ENCODE measurements at regions of chr10 and their contacts with region 1.

Region 1: GRCh38 chr10:20776384-20777118 is 120.6 kb downstream of the NEBL start:
- DNase-seq: no peak
- H3K4me3 ChIP-seq: no peak overlapping the region
- H3K27ac ChIP-seq: no peak overlapping the region
- H3K4me1 ChIP-seq: no peaks in the 10 kb centered on the region
- CTCF ChIP-seq: no peak

Region 2: DNA sequence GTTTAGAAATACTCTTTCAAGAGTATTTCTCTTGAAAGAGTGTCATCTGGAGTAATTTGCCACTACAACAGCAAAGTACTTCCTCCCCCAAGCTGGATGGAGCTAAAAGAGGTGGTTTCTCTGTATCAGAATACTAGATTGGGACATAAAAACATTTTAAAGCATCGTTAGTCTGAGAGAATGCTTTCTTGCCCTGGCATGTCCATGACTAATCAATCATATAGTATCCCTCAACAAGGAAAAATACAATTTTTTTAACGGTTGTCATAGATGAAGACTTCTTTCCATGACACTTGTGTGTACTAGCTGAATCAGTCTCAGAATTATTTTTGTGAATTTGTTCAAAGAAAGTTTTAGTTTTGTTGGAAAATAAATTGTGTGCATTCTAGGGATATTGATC is 117.3 kb before region 1 on chr10:
- CTCF ChIA-PET with region 1: no interaction called
- POLR2A ChIA-PET with region 1: no interaction called
- intact Hi-C with region 1: no loop called
- DNase-seq: no peak
- H3K4me3 ChIP-seq: no peak overlapping the region
- H3K27ac ChIP-seq: no peak overlapping the region
- H3K4me1 ChIP-seq: no peaks in the 10 kb centered on the region
- CTCF ChIP-seq: no peak

Region 3: GRCh38 chr10:20682782-20683181 is 93.8 kb before region 1 on chr10:
- CTCF ChIA-PET with region 1: no interaction called
- POLR2A ChIA-PET with region 1: no interaction called
- intact Hi-C with region 1: no loop called
- DNase-seq: no peak
- H3K4me3 ChIP-seq: no peak overlapping the region
- H3K27ac ChIP-seq: no peak overlapping the region
- H3K4me1 ChIP-seq: no peaks in the 10 kb centered on the region
- CTCF ChIP-seq: no peak

Region 4: GRCh38 chr10:22022257-22023032 is 1245.9 kb after region 1 on chr10:
- CTCF ChIA-PET with region 1: no interaction called
- POLR2A ChIA-PET with region 1: no interaction called
- intact Hi-C with region 1: loop called (anchors 5 kb)
- DNase-seq: peak; percentile 4
- H3K4me3 ChIP-seq: no peak overlapping the region
- H3K27ac ChIP-seq: no peak overlapping the region
- H3K4me1 ChIP-seq: no peaks in the 10 kb centered on the region
- CTCF ChIP-seq: no peak